ENCODE measurements at regions of chr10 and their contacts with region 1.

Region 1: DNA sequence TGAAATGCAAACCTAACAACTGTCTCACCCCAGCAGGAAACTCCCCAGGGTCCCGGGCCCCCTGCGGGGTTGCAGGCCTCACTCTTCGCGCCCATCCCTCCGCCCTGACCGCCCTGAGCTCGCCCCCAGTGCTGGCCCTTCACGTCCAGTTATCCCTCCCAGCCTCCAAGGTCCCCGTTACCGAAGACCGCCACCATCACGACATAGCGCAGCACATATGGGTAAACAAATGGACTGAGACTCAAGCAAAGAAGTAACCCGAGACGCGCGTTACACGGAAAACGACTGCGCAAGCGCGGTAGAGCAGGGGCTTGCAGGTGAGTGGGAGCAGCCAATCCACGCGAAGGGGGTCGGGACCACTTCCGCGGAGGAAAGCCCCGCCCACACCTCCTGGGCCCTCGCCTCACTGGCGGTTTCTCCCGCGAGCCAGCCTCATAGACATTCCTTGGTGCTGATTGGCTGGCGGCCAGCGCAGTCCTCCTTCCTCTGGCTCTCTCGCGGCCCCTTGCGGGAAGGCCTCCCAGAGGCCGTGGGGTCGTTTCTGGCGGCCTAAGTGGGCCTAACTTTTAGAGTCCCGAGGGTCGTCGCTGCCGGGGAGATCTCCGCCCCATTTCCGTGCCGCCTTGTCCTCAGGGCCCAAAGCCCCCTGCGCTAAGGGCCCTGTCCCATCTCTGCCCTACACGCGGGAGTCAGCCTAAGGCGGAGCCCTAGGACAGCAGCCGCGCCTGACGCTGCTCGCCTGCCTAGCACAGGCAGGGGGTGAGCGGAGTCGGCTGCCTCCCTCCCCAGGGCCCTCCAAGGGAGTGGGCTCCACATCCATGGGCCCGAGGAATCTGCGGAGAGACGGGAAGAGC is 9.2 kb upstream of the FXYD4 start:
- DNase-seq: peak; percentile 86 to 98 (median 97)
- ATAC-seq: peak; percentile 98
- H3K4me3 ChIP-seq: peak overlapping the region; percentile 92
- H3K4me3 Mint-ChIP-seq: peak overlapping the region; percentile 92 to 100 (median 97)
- H3K27ac ChIP-seq: peak overlapping the region; percentile 88
- H3K27ac Mint-ChIP-seq: peak overlapping the region; percentile 96 to 99 (median 97)
- H3K4me1 ChIP-seq: peaks cover 4 to 14% of the 10 kb centered on the region in 2 donors
- H3K4me1 Mint-ChIP-seq: peaks cover 13 to 33% (median 29%) of the 10 kb centered on the region in 7 donors
- H3K27me3 ChIP-seq: no peaks in the 10 kb centered on the region
- H3K27me3 Mint-ChIP-seq: no peaks in the 10 kb centered on the region

Region 2: DNA sequence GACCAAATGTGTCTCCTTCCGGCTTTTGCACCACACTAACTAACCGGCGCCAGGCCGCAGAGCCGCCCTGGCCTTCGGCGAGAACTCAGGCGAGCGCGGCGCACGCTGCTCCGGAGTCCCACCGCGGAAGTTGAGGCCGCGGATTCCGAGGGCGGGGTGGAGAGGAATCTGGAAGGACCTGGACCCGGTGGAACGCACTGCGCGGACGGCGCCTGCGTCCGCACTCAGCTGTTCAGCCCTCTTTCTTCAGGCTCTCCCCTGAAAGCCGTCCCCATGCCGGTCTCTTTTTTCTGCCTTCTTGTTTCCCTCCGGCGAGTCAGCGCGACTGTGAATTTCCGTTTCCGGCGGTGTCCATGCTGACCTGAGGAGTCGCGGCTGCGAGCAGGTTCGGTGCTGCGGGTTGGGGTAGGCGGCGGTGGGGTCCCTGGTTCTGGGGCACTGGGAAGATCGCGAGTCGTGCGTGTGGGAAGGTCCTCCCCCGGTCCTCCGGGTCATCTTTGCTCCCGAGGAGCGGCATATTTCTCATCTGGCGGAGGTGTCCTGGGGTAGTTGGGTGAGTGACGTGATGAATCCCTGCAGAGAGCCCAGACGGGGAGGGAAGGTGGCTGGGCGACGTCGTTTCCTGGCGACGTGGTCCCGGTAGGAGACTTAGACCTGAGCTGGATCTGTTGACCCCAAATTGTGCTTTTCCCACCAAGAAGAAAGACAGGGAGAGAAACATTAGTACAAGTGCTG is 579.6 kb before region 1 on chr10 and contains the start of gene BMS1:
- CTCF ChIA-PET with region 1: no interaction called
- POLR2A ChIA-PET with region 1: no interaction called
- intact Hi-C with region 1: loop called in 1 of 2 experiments (anchors 1 kb)
- DNase-seq: peak; percentile 78 to 91 (median 86)
- ATAC-seq: peak; percentile 95
- H3K4me3 ChIP-seq: peak within 1 kb of the TSS; percentile 86
- H3K4me3 Mint-ChIP-seq: peak within 1 kb of the TSS; percentile 89 to 100 (median 96)
- H3K27ac ChIP-seq: peak within 1 kb of the TSS; percentile 83
- H3K27ac Mint-ChIP-seq: peak within 1 kb of the TSS; percentile 88 to 98 (median 94)
- H3K4me1 ChIP-seq: peaks cover 0 to 13% of the 10 kb centered on the region in 2 donors
- H3K4me1 Mint-ChIP-seq: peaks cover 10 to 60% (median 45%) of the 10 kb centered on the region in 7 donors
- H3K27me3 ChIP-seq: no peaks in the 10 kb centered on the region
- H3K27me3 Mint-ChIP-seq: peaks cover 0 to 3% (median 0%) of the 10 kb centered on the region in 5 donors
- total RNA-seq, gene BMS1: 9.7 to 20.0 (median 16.9) TPM

Region 3: GRCh38 chr10:43292755-43293676 is 69.2 kb before region 1 on chr10:
- CTCF ChIA-PET with region 1: interaction called, 7 read pairs
- POLR2A ChIA-PET with region 1: interaction called, 10 read pairs
- intact Hi-C with region 1: loop called in 1 of 2 experiments (anchors 1 kb)
- DNase-seq: peak in 6 of 9 donors; percentile 22 to 51 (median 44)
- ATAC-seq: peak; percentile 72
- H3K4me3 ChIP-seq: no peak overlapping the region
- H3K4me3 Mint-ChIP-seq: peak overlapping the region; percentile 13 to 75 (median 55)
- H3K27ac ChIP-seq: no peak overlapping the region
- H3K27ac Mint-ChIP-seq: peak overlapping the region in 6 of 9 donors; percentile 65 to 84 (median 78)
- H3K4me1 ChIP-seq: peaks cover 31 to 35% of the 10 kb centered on the region in 2 donors
- H3K4me1 Mint-ChIP-seq: peaks cover 16 to 83% (median 34%) of the 10 kb centered on the region in 7 donors
- H3K27me3 ChIP-seq: no peaks in the 10 kb centered on the region
- H3K27me3 Mint-ChIP-seq: peaks cover 0 to 15% (median 6%) of the 10 kb centered on the region in 5 donors

Region 4: GRCh38 chr10:43407576-43408330 is 45.5 kb after region 1 on chr10:
- CTCF ChIA-PET with region 1: no interaction called
- POLR2A ChIA-PET with region 1: interaction called, 13 read pairs
- intact Hi-C with region 1: loop called (anchors 1 kb)
- DNase-seq: peak; percentile 67 to 91 (median 79)
- ATAC-seq: peak; percentile 48
- H3K4me3 ChIP-seq: peak overlapping the region; percentile 99
- H3K4me3 Mint-ChIP-seq: peak overlapping the region; percentile 91 to 100 (median 98)
- H3K27ac ChIP-seq: peak overlapping the region; percentile 100
- H3K27ac Mint-ChIP-seq: peak overlapping the region; percentile 97 to 99 (median 98)
- H3K4me1 ChIP-seq: peaks cover 28 to 37% of the 10 kb centered on the region in 2 donors
- H3K4me1 Mint-ChIP-seq: peaks cover 31 to 50% (median 39%) of the 10 kb centered on the region in 7 donors
- H3K27me3 ChIP-seq: no peaks in the 10 kb centered on the region
- H3K27me3 Mint-ChIP-seq: peaks cover 0 to 2% (median 0%) of the 10 kb centered on the region in 5 donors

Region 5: GRCh38 chr10:43436400-43437140 is 74.4 kb after region 1 on chr10 and contains the start of gene ZNF487:
- CTCF ChIA-PET with region 1: no interaction called
- POLR2A ChIA-PET with region 1: no interaction called
- intact Hi-C with region 1: loop called in 1 of 2 experiments (anchors 1 kb)
- DNase-seq: peak; percentile 87 to 94 (median 92)
- ATAC-seq: peak; percentile 94
- H3K4me3 ChIP-seq: peak within 1 kb of the TSS; percentile 97
- H3K4me3 Mint-ChIP-seq: peak within 1 kb of the TSS; percentile 93 to 99 (median 97)
- H3K27ac ChIP-seq: peak within 1 kb of the TSS; percentile 96
- H3K27ac Mint-ChIP-seq: peak within 1 kb of the TSS; percentile 93 to 100 (median 99)
- H3K4me1 ChIP-seq: peaks cover 5% of the 10 kb centered on the region in 2 donors
- H3K4me1 Mint-ChIP-seq: peaks cover 13 to 39% (median 27%) of the 10 kb centered on the region in 7 donors
- H3K27me3 ChIP-seq: no peaks in the 10 kb centered on the region
- H3K27me3 Mint-ChIP-seq: no peaks in the 10 kb centered on the region
- total RNA-seq, gene ZNF487: 4.1 to 12.0 (median 5.9) TPM

Region 6: DNA sequence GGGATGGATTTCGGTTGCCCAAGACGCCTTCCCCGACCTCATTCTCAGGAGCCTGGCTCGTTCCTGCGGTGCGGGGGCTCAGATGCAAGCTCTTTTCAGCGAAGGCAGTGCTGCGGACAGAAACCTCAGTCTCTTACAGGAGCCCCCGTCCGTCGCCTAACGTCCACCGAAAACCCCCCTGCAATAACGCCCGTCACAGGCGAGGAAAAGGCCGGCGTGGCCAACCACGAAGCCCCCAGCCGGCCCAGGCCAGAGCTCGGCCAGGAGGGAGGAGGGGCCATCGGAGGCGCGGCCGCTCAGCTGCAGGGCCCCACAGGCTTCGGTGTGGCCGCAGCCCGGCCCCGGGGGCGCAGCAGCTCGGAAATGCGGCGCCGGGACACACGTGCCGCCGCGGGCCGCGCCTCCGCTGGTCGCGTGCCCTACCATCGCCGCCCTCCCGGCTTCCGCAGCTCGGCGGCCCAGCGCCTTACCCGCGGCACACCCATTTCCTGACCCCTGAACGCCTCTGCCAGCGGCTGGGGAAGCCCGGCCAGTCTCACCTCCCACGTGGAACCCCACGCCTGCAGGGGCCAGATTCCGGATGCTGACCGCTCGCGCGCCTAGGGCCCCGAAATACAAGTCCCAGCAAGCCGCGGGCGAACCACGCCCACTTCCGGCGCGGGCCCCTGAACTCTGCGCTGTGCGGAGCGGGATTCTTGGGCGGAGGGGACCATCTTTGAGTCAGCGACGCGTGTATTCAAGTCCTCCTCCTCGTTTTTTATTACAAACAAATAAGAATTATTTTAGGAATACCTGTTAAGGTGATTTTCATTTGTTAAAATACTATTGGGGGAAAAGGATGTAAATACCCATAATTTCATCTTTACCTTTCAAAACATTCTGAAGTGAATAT is 212.0 kb after region 1 on chr10 and contains the start of gene ZNF239:
- CTCF ChIA-PET with region 1: no interaction called
- POLR2A ChIA-PET with region 1: no interaction called
- intact Hi-C with region 1: loop called in 1 of 2 experiments (anchors 1 kb)
- DNase-seq: peak; percentile 62 to 82 (median 78)
- ATAC-seq: peak; percentile 91
- H3K4me3 ChIP-seq: peak within 1 kb of the TSS; percentile 72
- H3K4me3 Mint-ChIP-seq: peak within 1 kb of the TSS; percentile 72 to 93 (median 90)
- H3K27ac ChIP-seq: peak within 1 kb of the TSS; percentile 66
- H3K27ac Mint-ChIP-seq: peak within 1 kb of the TSS; percentile 29 to 96 (median 93)
- H3K4me1 ChIP-seq: peaks cover 14 to 19% of the 10 kb centered on the region in 2 donors
- H3K4me1 Mint-ChIP-seq: peaks cover 28 to 64% (median 61%) of the 10 kb centered on the region in 7 donors
- H3K27me3 ChIP-seq: no peaks in the 10 kb centered on the region
- H3K27me3 Mint-ChIP-seq: peaks cover 0 to 3% (median 0%) of the 10 kb centered on the region in 5 donors
- total RNA-seq, gene ZNF239: 1.7 to 8.5 (median 2.3) TPM

Measured in naive thymus-derived CD4-positive, alpha-beta T cell (primary cell).